Gastrocnemius medialis (tissue), 4 donors: ENCODE measurements at regions of chr6 and their contacts with region 1.

Region 1: GRCh38 chr6:34656378-34657036 is 40.1 kb downstream of the ILRUN start:
- DNase-seq: peak; percentile 50 to 63
- ATAC-seq: peak; percentile 73 to 82
- H3K4me3 ChIP-seq: peak overlapping the region; percentile 51 to 60 (median 58)
- H3K27ac ChIP-seq: peak overlapping the region; percentile 92 to 97 (median 94)
- H3K4me1 ChIP-seq: peaks cover 59 to 62% of the 10 kb centered on the region in 2 donors
- H3K27me3 ChIP-seq: no peaks in the 10 kb centered on the region
- CTCF ChIP-seq: no peak
- POLR2A ChIP-seq: no peak

Region 2: DNA sequence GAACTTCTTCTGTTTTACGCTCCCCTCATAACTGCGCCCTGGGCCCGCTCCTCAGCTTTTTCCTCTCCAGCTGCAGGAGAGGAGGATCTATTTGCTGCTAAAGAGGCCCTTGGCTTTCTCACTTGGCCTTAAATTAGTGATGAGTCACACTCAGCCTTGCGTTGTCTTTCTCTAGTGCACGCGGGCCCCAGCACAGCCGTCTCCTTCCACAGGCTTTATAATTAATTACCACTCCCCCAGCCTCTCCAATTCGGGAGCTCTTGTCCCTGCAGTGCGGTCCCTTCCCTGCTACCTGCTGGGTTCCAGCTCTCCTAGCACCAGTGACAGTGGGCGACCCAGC is 165.4 kb before region 1 on chr6:
- in situ Hi-C with region 1: no loop called
- intact Hi-C with region 1: no loop called
- DNase-seq: peak in 1 of 2 donors; percentile 33
- ATAC-seq: peak; percentile 72 to 81
- H3K4me3 ChIP-seq: peak overlapping the region in 2 of 4 donors; percentile 21 to 36
- H3K27ac ChIP-seq: peak overlapping the region in 3 of 4 donors; percentile 53 to 78 (median 56)
- H3K4me1 ChIP-seq: peaks cover 0 to 6% of the 10 kb centered on the region in 2 donors
- H3K27me3 ChIP-seq: no peaks in the 10 kb centered on the region
- CTCF ChIP-seq: no peak
- POLR2A ChIP-seq: no peak

Region 3: GRCh38 chr6:34696739-34697543 is 40.4 kb after region 1 on chr6 and contains the start of gene ILRUN:
- in situ Hi-C with region 1: no loop called
- intact Hi-C with region 1: loop called (anchors 1 kb)
- DNase-seq: peak; percentile 92 to 94
- ATAC-seq: peak; percentile 78 to 80
- H3K4me3 ChIP-seq: peak within 1 kb of the TSS; percentile 79 to 100 (median 95)
- H3K27ac ChIP-seq: peak within 1 kb of the TSS; percentile 99 to 100 (median 100)
- H3K4me1 ChIP-seq: peaks cover 30 to 31% of the 10 kb centered on the region in 2 donors
- H3K27me3 ChIP-seq: no peaks in the 10 kb centered on the region
- CTCF ChIP-seq: no peak
- POLR2A ChIP-seq: peak; percentile 76 to 87
- total RNA-seq, gene ILRUN: 136 to 252 (median 169) TPM

Region 4: DNA sequence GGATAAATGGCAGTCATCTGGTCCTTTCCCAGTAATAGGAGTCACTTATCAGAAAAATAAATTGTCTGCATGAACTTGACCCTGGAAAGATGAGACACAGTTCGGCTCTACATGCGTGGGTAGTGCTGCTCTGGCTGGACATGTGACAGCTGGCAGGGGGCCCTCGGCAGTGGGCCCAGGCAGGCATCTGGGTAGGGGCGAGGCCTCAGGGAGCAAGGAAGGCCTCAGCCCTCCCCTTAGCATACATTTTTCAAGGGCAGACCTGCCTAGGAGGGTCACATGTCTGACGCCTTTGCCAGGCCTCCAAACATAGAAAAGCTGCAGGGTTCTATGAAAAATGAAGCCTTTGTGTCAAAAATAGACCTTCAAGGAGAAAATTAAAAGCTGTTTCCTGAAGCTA is 52.9 kb after region 1 on chr6:
- in situ Hi-C with region 1: no loop called
- intact Hi-C with region 1: no loop called
- DNase-seq: peak in 1 of 2 donors; percentile 34
- ATAC-seq: peak in 1 of 2 donors; percentile 39
- H3K4me3 ChIP-seq: no peak overlapping the region
- H3K27ac ChIP-seq: peak overlapping the region in 3 of 4 donors; percentile 15 to 41 (median 22)
- H3K4me1 ChIP-seq: no peaks in the 10 kb centered on the region
- H3K27me3 ChIP-seq: no peaks in the 10 kb centered on the region
- CTCF ChIP-seq: no peak
- POLR2A ChIP-seq: no peak